Uterus (tissue), 4 donors: ENCODE measurements at regions of chr12 and their contacts with region 1.

Region 1: GRCh38 chr12:1795785-1796514 is 24.4 kb upstream of the LRTM2 start:
- DNase-seq: peak; percentile 91 to 94
- H3K4me3 ChIP-seq: peak overlapping the region; percentile 48 to 52
- H3K27ac ChIP-seq: peak overlapping the region; percentile 77 to 85
- H3K4me1 ChIP-seq: peaks cover 0 to 7% of the 10 kb centered on the region in 2 donors
- H3K27me3 ChIP-seq: no peaks in the 10 kb centered on the region
- CTCF ChIP-seq: peak; percentile 92 to 100 (median 97)
- POLR2A ChIP-seq: peak in 1 of 2 donors; percentile 67

Region 2: GRCh38 chr12:1650260-1650977 is 145.5 kb before region 1 on chr12:
- intact Hi-C with region 1: loop called (anchors 5 kb)
- DNase-seq: no peak
- H3K4me3 ChIP-seq: no peak overlapping the region
- H3K27ac ChIP-seq: peak overlapping the region; percentile 24 to 57
- H3K4me1 ChIP-seq: no peaks in the 10 kb centered on the region
- H3K27me3 ChIP-seq: no peaks in the 10 kb centered on the region
- CTCF ChIP-seq: no peak
- POLR2A ChIP-seq: no peak

Region 3: GRCh38 chr12:1851151-1851701 is 55.3 kb after region 1 on chr12:
- intact Hi-C with region 1: no loop called
- DNase-seq: no peak
- H3K4me3 ChIP-seq: no peak overlapping the region
- H3K27ac ChIP-seq: no peak overlapping the region
- H3K4me1 ChIP-seq: no peaks in the 10 kb centered on the region
- H3K27me3 ChIP-seq: no peaks in the 10 kb centered on the region
- CTCF ChIP-seq: no peak
- POLR2A ChIP-seq: no peak

Region 4: GRCh38 chr12:1939801-1940607 is 144.1 kb after region 1 on chr12:
- intact Hi-C with region 1: loop called (anchors 5 kb)
- DNase-seq: peak; percentile 89 to 90
- H3K4me3 ChIP-seq: peak overlapping the region in 1 of 2 donors; percentile 3
- H3K27ac ChIP-seq: peak overlapping the region; percentile 75 to 76
- H3K4me1 ChIP-seq: no peaks in the 10 kb centered on the region
- H3K27me3 ChIP-seq: no peaks in the 10 kb centered on the region
- CTCF ChIP-seq: peak; percentile 91 to 97 (median 95)
- POLR2A ChIP-seq: no peak

Region 5: DNA sequence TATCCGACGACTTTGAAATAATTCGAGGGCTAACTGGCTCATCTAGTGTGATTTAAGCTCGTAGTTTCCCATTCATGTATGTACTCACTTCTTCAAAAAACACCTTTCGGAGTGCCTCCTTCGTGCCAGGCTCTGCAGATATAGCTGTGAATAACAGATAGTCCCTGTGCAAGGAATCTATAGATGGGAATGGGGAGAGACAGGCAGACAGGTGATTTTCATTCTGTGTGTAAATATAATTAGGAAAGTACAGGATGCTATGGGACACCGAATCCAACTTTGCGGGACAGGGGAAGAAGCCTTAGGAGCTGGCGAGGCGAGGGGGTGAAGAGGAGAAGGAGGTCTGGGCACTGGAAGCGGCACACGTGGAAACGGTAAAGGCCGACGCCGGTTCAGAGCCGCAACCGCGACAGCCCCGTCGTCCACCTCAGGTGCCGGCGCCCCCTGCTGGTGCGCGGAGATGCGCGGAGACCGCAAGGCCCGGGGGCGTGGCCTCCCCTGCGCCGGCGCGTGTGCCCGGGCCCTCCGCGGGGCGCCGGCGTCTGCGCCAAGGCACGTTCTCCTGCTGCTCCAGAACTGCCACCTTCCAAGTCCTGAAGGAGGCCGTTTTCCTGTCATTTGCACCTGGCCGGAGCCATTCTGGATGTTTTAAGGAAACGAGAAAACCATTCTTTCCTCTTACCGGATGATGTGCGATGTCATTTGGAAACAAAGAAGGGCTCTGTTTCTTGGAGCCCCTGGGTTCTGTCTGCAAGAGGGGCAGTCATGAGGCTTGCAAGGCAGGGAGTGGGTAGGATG is 238.9 kb after region 1 on chr12:
- intact Hi-C with region 1: loop called (anchors 5 kb)
- DNase-seq: peak; percentile 88 to 90
- H3K4me3 ChIP-seq: peak overlapping the region; percentile 28 to 32
- H3K27ac ChIP-seq: peak overlapping the region; percentile 79 to 87
- H3K4me1 ChIP-seq: peaks cover 7 to 13% of the 10 kb centered on the region in 2 donors
- H3K27me3 ChIP-seq: no peaks in the 10 kb centered on the region
- CTCF ChIP-seq: peak; percentile 78 to 99 (median 97)
- POLR2A ChIP-seq: peak; percentile 41 to 42

Region 6: DNA sequence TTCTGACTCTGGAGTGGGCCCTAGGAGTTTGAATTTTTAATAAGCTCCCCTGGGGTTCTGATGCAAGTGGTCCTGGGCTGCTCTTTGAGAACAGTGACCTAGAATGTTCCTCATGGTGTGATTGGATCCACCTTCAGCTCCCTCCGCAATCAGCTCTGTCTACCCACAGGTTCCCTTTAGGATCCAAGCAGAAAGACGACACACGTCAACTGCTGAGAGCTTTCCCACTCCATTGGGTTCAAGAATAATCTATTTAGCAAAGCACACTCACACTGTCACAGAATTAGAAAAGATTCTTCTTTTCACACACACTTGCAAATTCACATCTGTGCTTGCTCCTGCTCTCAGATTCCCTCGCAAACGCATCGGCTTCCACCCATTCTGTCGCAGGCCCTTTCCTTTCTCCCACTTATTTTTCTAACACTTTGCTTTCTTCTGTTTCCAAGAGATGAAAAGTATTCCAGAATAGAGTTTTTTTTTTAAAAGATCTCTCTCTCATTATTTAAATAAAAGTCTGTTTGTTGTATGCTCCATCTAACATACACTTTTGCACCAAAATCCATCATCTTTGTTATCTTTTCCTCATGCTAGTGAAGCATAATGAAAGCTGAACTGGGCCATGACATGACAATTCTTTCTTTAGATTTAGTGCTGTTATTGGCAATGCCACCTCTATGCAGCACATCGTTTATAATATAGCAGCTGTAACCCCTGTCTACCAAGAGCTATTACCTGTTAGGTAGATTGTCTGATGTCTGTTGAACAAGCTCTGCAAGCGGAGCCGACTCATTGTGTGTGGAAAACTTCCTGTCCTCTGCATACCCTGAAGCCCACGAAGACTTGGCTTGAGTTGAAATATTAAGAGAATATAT is 329.9 kb after region 1 on chr12:
- intact Hi-C with region 1: no loop called
- DNase-seq: no peak
- H3K4me3 ChIP-seq: no peak overlapping the region
- H3K27ac ChIP-seq: no peak overlapping the region
- H3K4me1 ChIP-seq: no peaks in the 10 kb centered on the region
- H3K27me3 ChIP-seq: no peaks in the 10 kb centered on the region
- CTCF ChIP-seq: no peak
- POLR2A ChIP-seq: no peak

Region 7: GRCh38 chr12:2583091-2583497 is 787.1 kb after region 1 on chr12:
- intact Hi-C with region 1: loop called (anchors 10 kb)
- DNase-seq: peak; percentile 56 to 77
- H3K4me3 ChIP-seq: no peak overlapping the region
- H3K27ac ChIP-seq: peak overlapping the region; percentile 35 to 52
- H3K4me1 ChIP-seq: peaks cover 0 to 7% of the 10 kb centered on the region in 2 donors
- H3K27me3 ChIP-seq: no peaks in the 10 kb centered on the region
- CTCF ChIP-seq: peak; percentile 76 to 97 (median 95)
- POLR2A ChIP-seq: no peak